Activated T-helper 1 cell treated with anti-CD3 and anti-CD28 coated beads, Interleukin-12 subunit alpha, Interleukin-12 subunit beta, Interleukin-2, Interleukin-4 antibody, amounts not matched to agents 30 ng/mL and 10 ng/mL and 1 ng/mL, durations not matched to agents 14 hours and 24 hours and 36 hours (primary cell): ENCODE measurements at regions of chr13 and their contacts with region 1.

Region 1: GRCh38 chr13:94419304-94419924 is 60.1 kb downstream of the DCT start:
- DNase-seq: no peak
- H3K4me3 Mint-ChIP-seq: peak overlapping the region; percentile 29
- H3K27ac Mint-ChIP-seq: peak overlapping the region; percentile 72
- H3K4me1 Mint-ChIP-seq: peaks cover 22% of the 10 kb centered on the region
- H3K27me3 Mint-ChIP-seq: no peaks in the 10 kb centered on the region

Region 2: DNA sequence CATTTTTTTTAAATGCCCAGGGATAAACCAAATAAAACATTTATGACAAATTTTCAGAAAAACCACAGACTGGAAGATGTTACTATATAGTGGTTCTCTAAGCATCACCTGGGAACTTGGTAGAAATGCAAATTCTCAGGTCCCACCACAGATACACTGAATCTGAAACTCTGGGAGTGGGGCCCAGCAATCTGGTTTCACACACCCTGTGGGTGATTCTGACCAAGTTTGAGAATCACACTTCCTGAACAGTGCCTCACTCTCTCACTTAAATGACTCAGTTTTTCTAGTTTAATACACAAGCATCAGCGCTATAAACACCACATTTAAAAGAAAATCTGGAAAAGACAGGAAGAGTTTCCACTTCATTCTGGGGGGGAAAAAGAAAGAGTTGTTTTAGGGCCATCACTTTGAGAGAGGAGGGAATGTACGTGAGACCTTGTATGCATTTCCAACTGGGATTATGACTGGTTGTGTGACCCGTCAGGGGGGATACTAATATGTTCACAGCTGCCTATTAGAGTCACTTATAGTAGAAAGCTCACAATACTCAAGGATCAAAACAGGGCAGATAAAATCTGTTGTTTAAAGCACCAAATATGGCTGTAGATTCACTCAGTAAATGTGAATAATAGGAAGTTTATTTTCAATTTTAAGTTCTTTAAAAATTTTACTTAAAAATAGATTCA is 625.1 kb before region 1 on chr13:
- intact Hi-C with region 1: loop called (anchors 1 kb)
- DNase-seq: peak; percentile 5
- H3K4me3 Mint-ChIP-seq: no peak overlapping the region
- H3K27ac Mint-ChIP-seq: peak overlapping the region; percentile 59
- H3K4me1 Mint-ChIP-seq: peaks cover 10% of the 10 kb centered on the region
- H3K27me3 Mint-ChIP-seq: peaks cover 5% of the 10 kb centered on the region

Region 3: GRCh38 chr13:94317063-94317491 is 102.3 kb before region 1 on chr13:
- intact Hi-C with region 1: loop called (anchors 1 kb)
- DNase-seq: peak; percentile 13
- H3K4me3 Mint-ChIP-seq: peak overlapping the region; percentile 44
- H3K27ac Mint-ChIP-seq: peak overlapping the region; percentile 86
- H3K4me1 Mint-ChIP-seq: peaks cover 80% of the 10 kb centered on the region
- H3K27me3 Mint-ChIP-seq: no peaks in the 10 kb centered on the region

Region 4: GRCh38 chr13:94351292-94351990 is 68.0 kb before region 1 on chr13:
- intact Hi-C with region 1: loop called (anchors 1 kb)
- DNase-seq: no peak
- H3K4me3 Mint-ChIP-seq: no peak overlapping the region
- H3K27ac Mint-ChIP-seq: peak overlapping the region; percentile 57
- H3K4me1 Mint-ChIP-seq: peaks cover 23% of the 10 kb centered on the region
- H3K27me3 Mint-ChIP-seq: peaks cover 3% of the 10 kb centered on the region

Region 5: DNA sequence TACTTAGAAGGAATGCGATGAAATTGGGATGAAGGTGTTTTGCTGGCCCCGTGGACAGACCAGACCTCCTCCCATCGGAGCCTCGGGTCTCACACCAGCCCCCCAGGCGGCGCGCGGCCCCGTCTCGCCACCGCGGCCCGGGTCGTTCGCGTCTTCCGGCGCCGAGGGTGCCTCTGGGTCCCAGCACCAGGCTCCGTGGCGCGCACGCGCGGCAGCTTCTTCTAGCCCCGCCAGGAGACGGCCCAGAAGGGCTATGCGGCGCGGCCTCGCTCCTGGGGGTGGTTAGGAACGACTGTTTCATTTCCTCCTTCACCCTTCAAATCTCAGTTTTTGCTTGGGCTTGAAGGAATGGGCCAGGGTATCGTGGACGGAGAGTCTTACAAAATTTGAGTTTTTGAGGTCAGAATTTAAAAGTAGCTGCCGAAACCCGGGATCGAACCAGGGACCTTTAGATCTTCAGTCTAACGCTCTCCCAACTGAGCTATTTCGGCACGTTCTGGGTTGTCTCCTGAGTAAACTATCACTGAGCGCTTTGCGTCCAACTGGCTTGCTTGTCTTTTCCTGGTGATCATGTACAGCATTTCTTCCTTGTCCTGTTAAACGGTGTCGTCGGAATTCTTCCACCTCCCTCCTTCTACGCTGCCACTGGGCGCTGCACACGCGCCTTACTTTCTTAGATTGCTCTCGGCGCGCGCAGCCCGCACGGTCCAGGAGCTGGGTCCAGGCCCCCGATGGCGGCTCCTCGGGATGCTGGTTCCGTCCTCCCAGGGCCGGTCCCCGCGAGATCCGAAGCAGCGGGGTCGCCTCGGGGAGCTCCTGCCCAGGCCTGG is 130.0 kb after region 1 on chr13:
- intact Hi-C with region 1: loop called (anchors 1 kb)
- DNase-seq: peak; percentile 87
- H3K4me3 Mint-ChIP-seq: peak overlapping the region; percentile 84
- H3K27ac Mint-ChIP-seq: peak overlapping the region; percentile 99
- H3K4me1 Mint-ChIP-seq: peaks cover 25% of the 10 kb centered on the region
- H3K27me3 Mint-ChIP-seq: peaks cover 15% of the 10 kb centered on the region

Region 6: DNA sequence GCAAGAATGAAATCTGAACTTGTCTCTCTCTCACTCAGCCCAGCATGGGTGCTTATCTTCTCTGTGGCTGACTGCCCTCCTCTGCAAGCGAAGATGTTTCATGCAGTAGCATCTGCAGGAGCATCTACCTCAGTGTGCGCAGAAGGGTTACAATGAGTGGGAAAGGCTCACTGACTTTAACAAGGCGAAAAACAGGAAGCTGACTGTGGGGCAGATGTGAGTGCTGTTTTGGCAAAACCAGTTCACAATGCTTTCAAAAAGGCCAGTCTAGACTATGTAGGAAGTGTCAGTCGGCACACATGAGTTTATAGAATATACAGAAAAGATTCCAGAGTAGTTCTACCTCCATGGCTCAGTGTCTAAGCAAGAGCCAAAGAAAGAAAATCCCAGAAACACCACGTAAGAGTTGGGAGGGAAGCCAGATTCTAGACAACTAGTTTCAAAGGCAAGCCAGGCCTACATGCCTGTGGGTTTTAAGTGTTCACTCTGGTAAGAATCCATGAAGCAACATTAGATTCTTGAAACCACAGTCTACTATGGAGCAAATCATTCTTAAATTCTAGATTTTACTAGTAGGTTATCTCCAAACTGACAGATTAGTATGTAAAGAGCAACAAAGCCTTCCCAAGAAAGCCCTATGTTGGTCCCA is 757.3 kb after region 1 on chr13:
- intact Hi-C with region 1: loop called (anchors 2 kb)
- DNase-seq: peak; percentile 5
- H3K4me3 Mint-ChIP-seq: no peak overlapping the region
- H3K27ac Mint-ChIP-seq: peak overlapping the region; percentile 61
- H3K4me1 Mint-ChIP-seq: peaks cover 33% of the 10 kb centered on the region
- H3K27me3 Mint-ChIP-seq: no peaks in the 10 kb centered on the region

Region 7: DNA sequence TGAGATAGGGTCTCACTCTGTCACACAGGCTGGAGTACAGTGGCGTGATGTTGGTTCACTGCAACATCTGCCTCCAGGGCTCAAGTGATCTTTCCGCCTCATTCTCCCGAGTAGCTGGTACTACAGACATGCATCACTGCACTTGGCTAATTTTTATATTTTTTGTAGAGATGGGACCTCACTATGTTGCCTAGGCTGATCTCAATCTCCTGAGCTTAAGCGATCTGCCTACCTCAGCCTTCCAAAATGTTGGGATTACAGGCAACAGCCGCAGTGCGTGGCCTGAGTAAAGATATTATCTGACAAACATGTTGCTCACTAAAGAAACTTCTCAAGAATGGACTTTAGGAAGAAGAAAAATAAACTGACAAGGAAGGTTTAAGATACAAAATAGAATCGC is 1007.2 kb after region 1 on chr13:
- intact Hi-C with region 1: no loop called
- DNase-seq: no peak
- H3K4me3 Mint-ChIP-seq: no peak overlapping the region
- H3K27ac Mint-ChIP-seq: no peak overlapping the region
- H3K4me1 Mint-ChIP-seq: no peaks in the 10 kb centered on the region
- H3K27me3 Mint-ChIP-seq: peaks cover 4% of the 10 kb centered on the region